ENCODE measurements at regions of chr14 and their contacts with region 1.

Region 1: GRCh38 chr14:65287264-65288131 is 125.0 kb upstream of the FUT8 start:
- DNase-seq: peak; percentile 23 to 82 (median 54)
- ATAC-seq: peak; percentile 86 to 91
- H3K4me3 Mint-ChIP-seq: peak overlapping the region; percentile 70 to 91 (median 88)
- H3K27ac Mint-ChIP-seq: peak overlapping the region; percentile 95 to 100 (median 98)
- H3K4me1 Mint-ChIP-seq: peaks cover 32 to 81% (median 77%) of the 10 kb centered on the region in 4 donors
- H3K27me3 Mint-ChIP-seq: no peaks in the 10 kb centered on the region

Region 2: GRCh38 chr14:65302571-65303189 is 15.2 kb after region 1 on chr14:
- POLR2A ChIA-PET with region 1: interaction called, 37 read pairs
- DNase-seq: peak in 1 of 10 donors; percentile 23
- ATAC-seq: peak; percentile 49 to 55
- H3K4me3 Mint-ChIP-seq: peak overlapping the region in 6 of 10 donors; percentile 9 to 56 (median 35)
- H3K27ac Mint-ChIP-seq: peak overlapping the region; percentile 12 to 81 (median 69)
- H3K4me1 Mint-ChIP-seq: peaks cover 35 to 68% (median 64%) of the 10 kb centered on the region in 4 donors
- H3K27me3 Mint-ChIP-seq: no peaks in the 10 kb centered on the region

Measured in naive thymus-derived CD8-positive, alpha-beta T cell (primary cell).